Activated CD4-positive, alpha-beta T cell treated with anti-CD3 and anti-CD28 coated beads for 36 hours (primary cell): ENCODE measurements at regions of chr1 and their contacts with region 1.

Region 1: GRCh38 chr1:112975336-112975735 is 19.3 kb upstream of the SLC16A1 start:
- DNase-seq: no peak
- ATAC-seq: no peak
- H3K4me3 Mint-ChIP-seq: no peak overlapping the region
- H3K27ac Mint-ChIP-seq: no peak overlapping the region
- H3K4me1 Mint-ChIP-seq: no peaks in the 10 kb centered on the region
- H3K27me3 Mint-ChIP-seq: no peaks in the 10 kb centered on the region

Region 2: DNA sequence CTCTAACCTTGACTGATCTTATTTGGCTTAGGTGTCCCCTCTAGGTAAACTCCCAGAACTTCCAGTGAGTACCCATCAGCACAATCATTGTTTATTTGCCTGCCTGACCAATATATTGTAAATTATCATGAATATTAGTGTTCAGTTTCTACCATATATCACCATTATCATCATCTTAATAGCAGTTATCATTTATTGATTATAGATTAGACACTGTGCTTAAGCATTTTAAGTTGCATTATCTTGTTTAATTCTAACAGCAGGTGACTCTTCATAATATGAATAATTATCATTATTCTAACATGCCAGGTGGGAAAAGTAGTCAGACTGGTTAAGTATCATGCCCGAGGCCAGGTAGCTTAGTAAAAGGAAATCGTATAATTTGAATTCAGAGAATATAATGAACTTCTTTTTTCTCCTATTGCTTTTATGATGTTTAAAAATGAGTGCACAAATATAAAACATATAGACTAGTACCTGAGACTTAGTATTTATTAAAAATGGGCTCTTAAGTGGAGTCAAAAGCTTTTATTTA is 1909.2 kb after region 1 on chr1:
- CTCF ChIA-PET with region 1: no interaction called
- POLR2A ChIA-PET with region 1: no interaction called
- intact Hi-C with region 1: loop called in 1 of 2 experiments (anchors 5 kb)
- DNase-seq: no peak
- ATAC-seq: no peak
- H3K4me3 Mint-ChIP-seq: no peak overlapping the region
- H3K27ac Mint-ChIP-seq: no peak overlapping the region
- H3K4me1 Mint-ChIP-seq: no peaks in the 10 kb centered on the region
- H3K27me3 Mint-ChIP-seq: peaks cover 24% of the 10 kb centered on the region